Esophagus squamous epithelium (tissue), 5 donors: ENCODE measurements at regions of chr10 and their contacts with region 1.

Region 1: GRCh38 chr10:121899727-121900126 is 28.1 kb downstream of the ATE1 start:
- DNase-seq: no peak
- H3K4me3 ChIP-seq: no peak overlapping the region
- H3K27ac ChIP-seq: no peak overlapping the region
- H3K4me1 ChIP-seq: peaks cover 0 to 4% (median 0%) of the 10 kb centered on the region in 3 donors
- H3K27me3 ChIP-seq: no peaks in the 10 kb centered on the region
- CTCF ChIP-seq: no peak
- POLR2A ChIP-seq: no peak

Region 2: GRCh38 chr10:120931423-120931822 is 968.3 kb before region 1 on chr10:
- intact Hi-C with region 1: loop called (anchors 10 kb)
- DNase-seq: no peak
- H3K4me3 ChIP-seq: no peak overlapping the region
- H3K27ac ChIP-seq: no peak overlapping the region
- H3K4me1 ChIP-seq: peaks cover 0 to 1% (median 0%) of the 10 kb centered on the region in 3 donors
- H3K27me3 ChIP-seq: no peaks in the 10 kb centered on the region
- CTCF ChIP-seq: no peak
- POLR2A ChIP-seq: no peak